Cardiac septum (tissue), 1 donor: ENCODE measurements at regions of chr11 and their contacts with region 1.

Region 1: GRCh38 chr11:30586251-30587144 is at the start of gene MPPED2:
- DNase-seq: peak; percentile 78
- total RNA-seq, gene MPPED2: 8.2 TPM

Region 2: GRCh38 chr11:30358536-30358935 is 228.0 kb before region 1 on chr11:
- intact Hi-C with region 1: loop called (anchors 10 kb)
- DNase-seq: no peak

Region 3: GRCh38 chr11:30483056-30483455 is 103.4 kb before region 1 on chr11:
- intact Hi-C with region 1: loop called (anchors 2 kb)
- DNase-seq: no peak